GM13976 (cell line): ENCODE measurements at regions of chr19 and their contacts with region 1.

Region 1: DNA sequence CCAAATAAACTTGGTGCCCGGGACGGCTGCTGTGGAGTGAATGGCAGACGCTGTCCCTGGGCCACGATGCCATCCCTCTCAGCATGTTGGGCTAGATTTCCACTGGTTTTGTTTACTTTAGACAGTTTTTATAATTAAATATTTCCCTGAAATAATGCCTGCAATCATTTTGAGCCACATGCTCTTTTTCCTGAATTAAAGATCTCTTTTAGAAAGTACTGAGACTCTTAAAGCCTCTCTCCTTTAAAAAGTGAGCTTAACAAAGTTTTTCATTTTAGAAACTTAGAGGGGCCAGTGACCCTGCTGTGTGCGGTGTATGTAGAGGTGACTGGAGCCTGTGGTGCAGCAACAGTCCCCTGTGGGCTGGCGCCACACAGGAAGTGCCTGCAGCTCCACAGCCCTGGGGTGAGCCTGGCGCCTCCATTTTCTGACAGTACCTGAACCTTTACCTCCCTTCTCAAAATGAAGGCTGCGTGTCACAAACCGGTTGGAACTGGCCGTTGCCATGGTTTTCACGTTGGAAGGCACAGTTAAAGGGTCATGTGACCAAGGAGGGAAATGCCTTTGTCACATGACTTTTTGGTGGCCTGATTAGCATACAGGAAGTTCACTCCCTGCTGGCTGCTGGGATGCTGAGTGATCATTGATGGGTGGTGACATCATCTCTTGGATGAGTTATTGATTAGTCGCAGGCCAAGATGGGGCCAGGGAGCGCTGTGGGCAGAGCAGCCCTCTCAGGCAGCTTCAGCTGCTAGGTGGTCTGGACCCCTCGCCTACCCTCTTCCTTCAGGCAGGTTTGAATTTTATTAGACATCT is 26.3 kb downstream of the TSSK6 start:
- DNase-seq: peak; percentile 73
- CTCF ChIP-seq: no peak

Region 2: DNA sequence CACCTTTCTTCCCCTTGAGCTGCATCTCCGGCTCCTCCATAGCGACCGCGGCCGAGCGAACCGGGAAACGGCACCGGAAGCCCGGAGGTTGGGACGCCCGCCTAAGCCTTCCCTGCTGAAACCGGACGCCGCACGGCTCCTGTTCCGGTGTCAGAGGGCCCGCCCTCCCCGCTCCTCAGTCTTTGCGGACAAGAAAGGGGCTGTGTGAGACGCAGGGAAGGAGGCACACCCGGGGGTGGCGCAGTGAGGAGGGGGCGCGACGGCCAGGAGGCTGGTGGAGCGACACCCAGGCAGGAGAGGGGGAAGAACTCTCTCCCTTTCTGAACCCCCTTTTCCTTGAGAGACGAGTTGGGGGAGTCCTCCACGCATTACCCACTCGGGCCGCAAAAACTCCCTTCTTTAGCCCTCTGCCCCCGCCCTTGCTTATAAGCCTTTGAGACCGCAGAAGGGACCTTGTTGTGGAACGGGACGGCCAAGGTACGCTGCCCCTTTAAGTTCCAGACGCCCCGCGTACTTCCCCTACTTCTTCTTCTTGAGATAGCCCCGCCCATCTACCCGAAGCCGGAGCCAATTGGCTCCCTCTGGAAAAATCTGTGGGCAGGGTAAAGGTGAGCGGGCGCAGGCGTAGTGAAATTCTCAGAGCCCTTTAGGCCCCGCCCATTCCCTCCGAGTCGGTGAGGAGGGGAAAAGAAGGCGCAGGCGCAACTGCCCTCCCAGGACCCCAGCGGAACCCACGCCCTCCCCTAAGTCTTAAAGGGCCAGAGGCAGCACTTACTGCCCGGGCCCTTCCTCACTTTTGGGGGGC is 296.8 kb before region 1 on chr19 and contains the starts of genes BORCS8 and RFXANK:
- in situ Hi-C with region 1: loop called (anchors 25 kb)
- DNase-seq: peak; percentile 98
- CTCF ChIP-seq: no peak

Region 3: GRCh38 chr19:19261350-19262189 is 227.5 kb before region 1 on chr19:
- in situ Hi-C with region 1: no loop called
- DNase-seq: no peak
- CTCF ChIP-seq: no peak

Region 4: GRCh38 chr19:19366612-19367396 is 122.3 kb before region 1 on chr19:
- in situ Hi-C with region 1: loop called (anchors 5 kb)
- DNase-seq: peak; percentile 84
- CTCF ChIP-seq: peak; percentile 94

Region 5: GRCh38 chr19:19381007-19381926 is 107.8 kb before region 1 on chr19:
- in situ Hi-C with region 1: no loop called
- DNase-seq: no peak
- CTCF ChIP-seq: no peak

Region 6: GRCh38 chr19:19399733-19400433 is 89.2 kb before region 1 on chr19:
- in situ Hi-C with region 1: loop called (anchors 10 kb)
- DNase-seq: no peak
- CTCF ChIP-seq: no peak

Region 7: GRCh38 chr19:19459707-19460251 is 29.3 kb before region 1 on chr19:
- in situ Hi-C with region 1: no loop called
- DNase-seq: peak; percentile 67
- CTCF ChIP-seq: no peak